ENCODE measurements at regions of chr5 and their contacts with region 1.

Region 1: DNA sequence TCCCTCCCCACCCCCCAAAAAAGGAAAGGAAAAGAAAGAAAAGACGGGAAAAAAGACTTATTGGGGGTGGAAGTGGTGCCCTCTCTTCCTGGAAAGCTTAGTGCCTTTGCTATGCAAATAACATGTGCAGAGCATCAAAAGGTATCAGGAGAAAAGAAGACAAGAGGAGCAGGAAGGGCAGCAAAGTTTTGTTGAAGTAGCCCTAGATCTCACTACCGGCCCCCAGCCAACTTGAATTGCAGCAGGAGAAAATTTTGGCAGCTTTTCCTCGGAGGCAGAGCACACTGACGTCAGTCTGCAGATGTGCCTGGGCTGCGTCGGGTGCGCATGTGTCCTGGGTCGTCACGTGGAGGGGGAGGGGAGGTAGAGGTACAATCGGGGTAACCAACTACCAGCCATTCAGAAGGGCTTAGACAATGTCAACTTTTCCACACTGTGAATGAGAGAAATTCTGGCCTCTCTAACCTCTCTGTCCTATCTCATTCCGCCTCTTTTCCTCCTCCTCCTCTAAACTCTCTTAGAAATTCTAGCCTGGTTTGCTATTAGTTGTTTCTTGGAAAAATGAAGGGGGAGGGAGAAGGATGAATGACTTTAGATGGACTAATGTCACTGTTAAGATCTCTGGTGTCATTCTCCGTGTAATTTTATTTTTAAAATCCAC is at the start of gene ADAMTS6:
- DNase-seq: peak; percentile 85
- ATAC-seq: peak; percentile 87
- H3K4me3 ChIP-seq: peak within 1 kb of the TSS; percentile 69 to 99 (median 74)
- H3K4me3 Mint-ChIP-seq: no peak within 1 kb of the TSS
- H3K27ac ChIP-seq: peak within 1 kb of the TSS; percentile 55 to 81
- H3K27ac Mint-ChIP-seq: peak within 1 kb of the TSS; percentile 90
- H3K4me1 ChIP-seq: peaks cover 0 to 12% of the 10 kb centered on the region in 2 donors
- H3K4me1 Mint-ChIP-seq: peaks cover 7% of the 10 kb centered on the region
- H3K27me3 ChIP-seq: no peaks in the 10 kb centered on the region
- H3K27me3 Mint-ChIP-seq: no peaks in the 10 kb centered on the region
- CTCF ChIP-seq: no peak
- total RNA-seq, gene ADAMTS6: 11.9 and 12.3 TPM in 2 replicates

Region 2: DNA sequence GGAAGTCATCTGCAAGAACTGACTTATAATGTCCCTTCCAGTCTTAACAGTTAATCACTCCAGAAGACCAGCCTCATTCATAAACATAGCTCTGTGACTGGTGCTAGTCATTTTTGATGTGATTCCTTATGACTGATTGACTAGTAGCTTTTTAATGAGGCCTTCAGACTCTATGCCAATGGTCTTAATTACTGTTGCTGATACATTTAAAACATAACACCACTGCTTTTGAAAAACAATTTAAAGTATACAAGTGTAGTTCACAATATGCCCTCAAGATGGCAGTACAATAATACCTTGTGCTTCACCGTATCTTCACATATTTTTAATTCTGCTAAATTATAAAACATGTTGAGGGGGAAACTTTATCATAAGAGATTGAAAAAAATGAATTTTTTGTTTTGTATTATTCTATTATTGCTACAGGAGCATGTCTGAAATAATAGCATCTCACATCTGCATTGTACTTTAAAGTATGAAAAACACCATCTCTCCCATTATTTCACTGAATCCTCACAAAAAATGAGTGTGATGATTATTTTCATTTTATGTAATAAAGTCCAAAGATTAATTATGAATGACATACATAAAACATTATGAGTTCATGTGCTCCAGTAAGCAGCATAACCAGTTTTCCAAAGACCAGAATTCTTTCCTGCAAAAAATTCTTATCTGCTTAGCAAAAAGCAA is 846.6 kb before region 1 on chr5:
- CTCF ChIA-PET with region 1: interaction called, 31 read pairs
- POLR2A ChIA-PET with region 1: no interaction called
- intact Hi-C with region 1: loop called (anchors 1 kb)
- DNase-seq: peak; percentile 50
- ATAC-seq: no peak
- H3K4me3 ChIP-seq: no peak overlapping the region
- H3K4me3 Mint-ChIP-seq: no peak overlapping the region
- H3K27ac ChIP-seq: no peak overlapping the region
- H3K27ac Mint-ChIP-seq: no peak overlapping the region
- H3K4me1 ChIP-seq: no peaks in the 10 kb centered on the region
- H3K4me1 Mint-ChIP-seq: no peaks in the 10 kb centered on the region
- H3K27me3 ChIP-seq: peaks cover 0 to 8% (median 3%) of the 10 kb centered on the region in 4 experiments
- H3K27me3 Mint-ChIP-seq: peaks cover 32% of the 10 kb centered on the region
- CTCF ChIP-seq: peak; percentile 96

Region 3: DNA sequence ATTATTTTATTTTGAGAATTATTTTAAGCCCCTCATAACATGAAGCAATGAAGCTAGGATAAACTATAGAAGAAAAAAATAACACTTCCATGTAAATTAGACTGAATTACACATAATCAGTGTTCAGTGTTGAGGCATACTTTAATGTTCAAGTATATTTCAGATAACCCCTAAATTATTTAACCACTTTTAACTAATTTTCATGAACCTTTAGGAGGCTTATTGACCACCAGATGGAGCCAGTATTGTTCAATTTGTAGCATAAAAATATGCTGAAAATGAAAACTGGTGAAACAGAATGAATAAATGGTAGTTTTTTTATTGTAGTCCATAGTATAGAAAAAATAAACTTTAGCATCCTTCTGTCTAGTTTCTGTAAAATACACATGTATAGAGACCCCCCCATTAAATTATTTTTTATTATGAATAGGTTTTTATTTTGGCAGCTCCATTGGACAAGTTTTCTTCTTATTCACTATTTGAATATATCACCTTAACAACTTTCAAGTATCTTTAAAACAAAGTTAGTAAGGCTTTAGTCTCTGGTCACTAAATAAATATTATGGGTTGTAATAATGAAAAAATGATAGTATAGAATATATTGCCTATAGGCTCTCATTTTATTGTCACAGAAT is 522.9 kb before region 1 on chr5:
- CTCF ChIA-PET with region 1: interaction called, 160 read pairs
- POLR2A ChIA-PET with region 1: no interaction called
- intact Hi-C with region 1: loop called (anchors 1 kb)
- DNase-seq: peak; percentile 40
- ATAC-seq: no peak
- H3K4me3 ChIP-seq: no peak overlapping the region
- H3K4me3 Mint-ChIP-seq: no peak overlapping the region
- H3K27ac ChIP-seq: no peak overlapping the region
- H3K27ac Mint-ChIP-seq: no peak overlapping the region
- H3K4me1 ChIP-seq: no peaks in the 10 kb centered on the region
- H3K4me1 Mint-ChIP-seq: no peaks in the 10 kb centered on the region
- H3K27me3 ChIP-seq: no peaks in the 10 kb centered on the region
- H3K27me3 Mint-ChIP-seq: no peaks in the 10 kb centered on the region
- CTCF ChIP-seq: peak; percentile 69

Region 4: DNA sequence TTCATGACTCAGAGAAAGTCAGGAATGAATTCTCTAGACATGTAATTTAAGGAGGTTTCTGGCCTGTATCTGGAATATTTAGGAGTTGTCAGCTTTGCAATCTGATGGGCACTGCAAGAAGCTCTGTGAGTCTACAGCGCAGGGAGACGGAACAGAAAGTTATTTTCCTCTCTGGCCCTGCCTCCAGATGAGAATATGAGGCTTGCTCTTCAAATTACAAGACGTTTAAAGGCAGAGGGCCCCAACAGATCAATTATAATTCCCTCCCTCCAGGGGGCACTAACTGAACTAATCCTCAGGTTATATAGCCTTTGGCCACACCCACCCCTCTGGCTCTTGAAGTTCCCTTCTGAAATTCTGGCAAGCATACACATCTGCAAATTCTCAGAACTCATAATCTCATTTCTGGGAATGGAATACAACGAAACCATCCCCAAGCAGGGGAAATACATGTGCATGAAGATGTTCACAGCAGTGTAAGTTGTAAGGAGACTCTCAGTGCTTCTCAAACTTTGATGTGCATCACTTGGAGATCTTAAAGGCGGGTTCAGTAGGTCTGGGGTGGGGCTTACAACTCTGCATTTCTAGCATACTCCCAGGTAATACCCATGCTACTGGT is 405.4 kb before region 1 on chr5:
- CTCF ChIA-PET with region 1: interaction called, 22 read pairs
- POLR2A ChIA-PET with region 1: no interaction called
- intact Hi-C with region 1: loop called (anchors 1 kb)
- DNase-seq: peak; percentile 73
- ATAC-seq: peak; percentile 93
- H3K4me3 ChIP-seq: no peak overlapping the region
- H3K4me3 Mint-ChIP-seq: no peak overlapping the region
- H3K27ac ChIP-seq: no peak overlapping the region
- H3K27ac Mint-ChIP-seq: no peak overlapping the region
- H3K4me1 ChIP-seq: peaks cover 10 to 15% of the 10 kb centered on the region in 2 donors
- H3K4me1 Mint-ChIP-seq: peaks cover 13% of the 10 kb centered on the region
- H3K27me3 ChIP-seq: no peaks in the 10 kb centered on the region
- H3K27me3 Mint-ChIP-seq: no peaks in the 10 kb centered on the region
- CTCF ChIP-seq: peak; percentile 56

Region 5: GRCh38 chr5:65459995-65460394 is 21.8 kb before region 1 on chr5:
- CTCF ChIA-PET with region 1: interaction called, 11 read pairs
- POLR2A ChIA-PET with region 1: no interaction called
- intact Hi-C with region 1: no loop called
- DNase-seq: no peak
- ATAC-seq: no peak
- H3K4me3 ChIP-seq: no peak overlapping the region
- H3K4me3 Mint-ChIP-seq: no peak overlapping the region
- H3K27ac ChIP-seq: no peak overlapping the region
- H3K27ac Mint-ChIP-seq: no peak overlapping the region
- H3K4me1 ChIP-seq: no peaks in the 10 kb centered on the region
- H3K4me1 Mint-ChIP-seq: no peaks in the 10 kb centered on the region
- H3K27me3 ChIP-seq: no peaks in the 10 kb centered on the region
- H3K27me3 Mint-ChIP-seq: no peaks in the 10 kb centered on the region
- CTCF ChIP-seq: no peak

Region 6: GRCh38 chr5:65624571-65625555 is 143.1 kb after region 1 on chr5 and contains the starts of genes SHLD3 and TRAPPC13:
- CTCF ChIA-PET with region 1: no interaction called
- POLR2A ChIA-PET with region 1: no interaction called
- intact Hi-C with region 1: loop called (anchors 5 kb)
- DNase-seq: peak; percentile 96
- ATAC-seq: peak; percentile 76
- H3K4me3 ChIP-seq: peak within 1 kb of the TSS; percentile 88 to 99 (median 88)
- H3K4me3 Mint-ChIP-seq: peak within 1 kb of the TSS; percentile 99
- H3K27ac ChIP-seq: peak within 1 kb of the TSS; percentile 73 to 84
- H3K27ac Mint-ChIP-seq: peak within 1 kb of the TSS; percentile 98
- H3K4me1 ChIP-seq: peaks cover 16 to 21% of the 10 kb centered on the region in 2 donors
- H3K4me1 Mint-ChIP-seq: peaks cover 41% of the 10 kb centered on the region
- H3K27me3 ChIP-seq: no peaks in the 10 kb centered on the region
- H3K27me3 Mint-ChIP-seq: no peaks in the 10 kb centered on the region
- CTCF ChIP-seq: peak; percentile 18
- total RNA-seq, gene SHLD3: 6.3 and 6.7 TPM in 2 replicates
- total RNA-seq, gene TRAPPC13: 18.8 and 24.4 TPM in 2 replicates

Measured in B cell (primary cell).